Endothelial cell of umbilical vein (primary cell): ENCODE measurements at regions of chr12 and their contacts with region 1.

Region 1: DNA sequence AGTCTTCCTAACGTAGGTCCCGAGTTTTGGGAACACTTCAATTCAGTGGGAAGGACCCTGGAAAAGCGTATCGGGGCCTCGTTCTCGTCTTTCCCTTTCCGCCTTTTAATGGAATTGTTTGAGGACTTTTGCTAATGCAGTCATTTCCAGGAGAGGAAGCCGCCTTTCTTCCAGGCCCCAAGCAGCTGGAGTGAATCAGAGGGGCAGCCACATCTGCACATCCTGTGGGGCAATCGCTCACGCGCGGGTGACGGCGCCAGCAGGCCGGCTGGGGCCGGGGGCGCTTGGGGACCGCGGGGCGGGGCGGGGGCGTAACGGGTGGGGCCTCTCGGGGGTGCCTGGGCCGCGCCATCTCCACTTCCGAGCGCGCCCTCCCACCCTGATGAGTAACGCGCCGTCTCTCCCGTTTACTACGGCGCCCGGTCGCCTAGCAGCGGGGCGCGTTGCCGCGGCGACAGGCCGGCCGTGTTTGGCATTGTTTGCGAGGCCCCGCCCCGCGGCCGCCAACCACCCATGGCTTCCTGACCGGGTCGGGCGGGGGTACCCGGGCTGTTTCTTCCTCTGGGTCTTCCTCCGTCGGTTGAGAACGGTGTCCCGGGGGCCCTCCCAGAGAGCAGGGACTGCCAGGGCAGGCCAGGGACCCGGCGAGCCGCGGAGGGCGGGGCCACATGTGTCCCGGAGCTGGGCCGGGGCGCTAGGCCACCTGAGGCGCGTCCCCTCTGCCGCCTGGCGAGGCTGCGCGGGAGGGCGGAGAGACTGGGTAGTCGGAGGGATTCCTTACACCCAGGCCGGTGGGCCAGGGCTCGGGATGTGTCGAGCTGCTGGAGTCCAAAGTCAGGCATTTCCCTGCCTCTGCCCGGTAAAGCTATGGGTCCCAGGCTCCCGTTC is 2.3 kb downstream of the GSG1 start:
- DNase-seq: peak; percentile 95
- H3K4me3 ChIP-seq: peak overlapping the region in 2 of 3 experiments; percentile 36 to 47
- H3K27ac ChIP-seq: peak overlapping the region; percentile 100
- H3K4me1 ChIP-seq: peaks cover 46% of the 10 kb centered on the region
- H3K27me3 ChIP-seq: no peaks in the 10 kb centered on the region
- CTCF ChIP-seq: no peak
- POLR2A ChIP-seq: no peak

Region 2: DNA sequence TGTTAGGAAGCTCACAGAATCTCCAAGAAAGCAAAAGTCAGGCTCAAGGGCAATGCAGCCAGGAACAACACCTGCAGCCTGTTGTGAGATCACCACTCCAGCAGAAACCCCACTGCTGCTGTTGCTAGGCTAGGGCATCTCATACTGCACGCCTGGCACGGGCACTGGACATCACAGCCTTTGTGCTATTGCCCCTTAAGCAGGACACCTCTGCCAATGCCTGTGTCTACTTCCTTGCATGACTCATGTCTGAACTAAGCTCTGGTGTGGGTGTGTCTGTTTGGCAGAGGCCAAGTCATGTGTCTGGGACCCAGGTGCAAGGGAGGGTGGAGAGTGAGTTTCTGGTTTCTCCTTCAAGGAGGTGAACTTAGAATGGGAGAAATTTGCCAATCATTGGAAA is 297.9 kb before region 1 on chr12:
- CTCF ChIA-PET with region 1: no interaction called
- POLR2A ChIA-PET with region 1: no interaction called
- dilution Hi-C with region 1: no loop called
- intact Hi-C with region 1: loop called (anchors 1 kb)
- DNase-seq: peak; percentile 89
- H3K4me3 ChIP-seq: no peak overlapping the region
- H3K27ac ChIP-seq: peak overlapping the region; percentile 95
- H3K4me1 ChIP-seq: peaks cover 36% of the 10 kb centered on the region
- H3K27me3 ChIP-seq: no peaks in the 10 kb centered on the region
- CTCF ChIP-seq: no peak
- POLR2A ChIP-seq: no peak

Region 3: GRCh38 chr12:12899530-12900380 is 201.4 kb before region 1 on chr12:
- CTCF ChIA-PET with region 1: no interaction called
- POLR2A ChIA-PET with region 1: no interaction called
- dilution Hi-C with region 1: no loop called
- intact Hi-C with region 1: loop called (anchors 5 kb)
- DNase-seq: peak; percentile 81
- H3K4me3 ChIP-seq: no peak overlapping the region
- H3K27ac ChIP-seq: peak overlapping the region; percentile 91
- H3K4me1 ChIP-seq: peaks cover 49% of the 10 kb centered on the region
- H3K27me3 ChIP-seq: no peaks in the 10 kb centered on the region
- CTCF ChIP-seq: no peak
- POLR2A ChIP-seq: no peak

Region 4: DNA sequence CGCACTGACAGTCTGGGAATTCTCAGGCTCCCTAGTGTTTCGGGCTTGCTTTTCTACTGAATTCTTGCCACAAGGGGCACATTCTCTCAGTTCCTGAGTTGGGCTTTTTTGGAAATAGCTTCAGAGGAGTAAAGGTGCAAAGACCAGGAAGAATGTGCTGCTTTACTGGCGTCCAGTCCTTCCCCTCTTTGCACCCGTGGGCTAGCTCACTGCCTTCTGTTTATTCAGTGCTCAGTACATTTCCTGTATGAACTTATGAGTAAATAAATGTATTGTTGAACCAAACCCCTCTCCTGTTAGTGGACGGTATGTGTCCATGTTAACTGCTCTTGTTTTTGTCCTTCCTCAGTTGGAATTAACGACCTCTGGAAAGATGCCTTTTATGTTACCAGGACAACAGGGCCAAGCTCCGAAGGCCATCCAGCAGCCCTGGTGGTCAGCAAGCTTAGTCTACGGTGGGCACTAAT is 21.7 kb before region 1 on chr12:
- CTCF ChIA-PET with region 1: interaction called, 23 read pairs
- POLR2A ChIA-PET with region 1: interaction called, 3 read pairs
- dilution Hi-C with region 1: no loop called
- intact Hi-C with region 1: loop called (anchors 1 kb)
- DNase-seq: peak; percentile 98
- H3K4me3 ChIP-seq: no peak overlapping the region
- H3K27ac ChIP-seq: peak overlapping the region; percentile 69
- H3K4me1 ChIP-seq: peaks cover 12% of the 10 kb centered on the region
- H3K27me3 ChIP-seq: no peaks in the 10 kb centered on the region
- CTCF ChIP-seq: peak; percentile 64 to 76
- POLR2A ChIP-seq: no peak

Region 5: GRCh38 chr12:13124661-13125505 is 23.8 kb after region 1 on chr12:
- CTCF ChIA-PET with region 1: interaction called, 8 read pairs
- POLR2A ChIA-PET with region 1: interaction called, 8 read pairs
- dilution Hi-C with region 1: no loop called
- intact Hi-C with region 1: loop called (anchors 1 kb)
- DNase-seq: peak; percentile 89
- H3K4me3 ChIP-seq: no peak overlapping the region
- H3K27ac ChIP-seq: peak overlapping the region; percentile 90
- H3K4me1 ChIP-seq: peaks cover 20% of the 10 kb centered on the region
- H3K27me3 ChIP-seq: no peaks in the 10 kb centered on the region
- CTCF ChIP-seq: no peak
- POLR2A ChIP-seq: peak; percentile 45

Region 6: GRCh38 chr12:13196130-13196921 is 95.2 kb after region 1 on chr12 and contains the start of gene EMP1:
- CTCF ChIA-PET with region 1: interaction called, 12 read pairs
- POLR2A ChIA-PET with region 1: interaction called, 15 read pairs
- dilution Hi-C with region 1: no loop called
- intact Hi-C with region 1: loop called (anchors 1 kb)
- DNase-seq: peak; percentile 99
- H3K4me3 ChIP-seq: peak within 1 kb of the TSS; percentile 85 to 99 (median 95)
- H3K27ac ChIP-seq: peak within 1 kb of the TSS; percentile 96
- H3K4me1 ChIP-seq: peaks cover 35% of the 10 kb centered on the region
- H3K27me3 ChIP-seq: no peaks in the 10 kb centered on the region
- CTCF ChIP-seq: no peak
- POLR2A ChIP-seq: peak; percentile 99
- total RNA-seq, gene EMP1: 528 and 577 TPM in 2 replicates

Region 7: GRCh38 chr12:13390381-13390861 is 289.3 kb after region 1 on chr12:
- CTCF ChIA-PET with region 1: no interaction called
- POLR2A ChIA-PET with region 1: no interaction called
- dilution Hi-C with region 1: no loop called
- intact Hi-C with region 1: no loop called
- DNase-seq: peak; percentile 9
- H3K4me3 ChIP-seq: no peak overlapping the region
- H3K27ac ChIP-seq: no peak overlapping the region
- H3K4me1 ChIP-seq: no peaks in the 10 kb centered on the region
- H3K27me3 ChIP-seq: no peaks in the 10 kb centered on the region
- CTCF ChIP-seq: no peak
- POLR2A ChIP-seq: no peak